Activated CD4-positive, alpha-beta T cell treated with anti-CD3 and anti-CD28 coated beads for 36 hours (primary cell): ENCODE measurements at regions of chr17 and their contacts with region 1.

Region 1: GRCh38 chr17:44968226-44969143 is at the start of gene C1QL1:
- DNase-seq: peak; percentile 93
- ATAC-seq: peak; percentile 79
- H3K4me3 Mint-ChIP-seq: peak within 1 kb of the TSS; percentile 64
- H3K27ac Mint-ChIP-seq: no peak within 1 kb of the TSS
- H3K4me1 Mint-ChIP-seq: peaks cover 44% of the 10 kb centered on the region
- H3K27me3 Mint-ChIP-seq: peaks cover 41% of the 10 kb centered on the region
- total RNA-seq, gene C1QL1: 0.37 to 0.83 TPM

Region 2: GRCh38 chr17:44385287-44386181 is 583.0 kb before region 1 on chr17:
- CTCF ChIA-PET with region 1: no interaction called
- POLR2A ChIA-PET with region 1: no interaction called
- intact Hi-C with region 1: loop called in 1 of 2 experiments (anchors 1 kb)
- DNase-seq: peak; percentile 96
- ATAC-seq: peak; percentile 96
- H3K4me3 Mint-ChIP-seq: peak overlapping the region; percentile 62
- H3K27ac Mint-ChIP-seq: peak overlapping the region; percentile 21
- H3K4me1 Mint-ChIP-seq: peaks cover 12% of the 10 kb centered on the region
- H3K27me3 Mint-ChIP-seq: peaks cover 22% of the 10 kb centered on the region

Region 3: GRCh38 chr17:44829523-44830358 is 138.7 kb before region 1 on chr17 and contains the start of gene GJC1:
- CTCF ChIA-PET with region 1: no interaction called
- POLR2A ChIA-PET with region 1: no interaction called
- intact Hi-C with region 1: loop called in 1 of 2 experiments (anchors 5 kb)
- DNase-seq: peak; percentile 50
- ATAC-seq: peak; percentile 64
- H3K4me3 Mint-ChIP-seq: peak within 1 kb of the TSS; percentile 76
- H3K27ac Mint-ChIP-seq: peak within 1 kb of the TSS; percentile 75
- H3K4me1 Mint-ChIP-seq: peaks cover 13% of the 10 kb centered on the region
- H3K27me3 Mint-ChIP-seq: peaks cover 36% of the 10 kb centered on the region
- total RNA-seq, gene GJC1: 3.3 to 3.7 TPM

Region 4: DNA sequence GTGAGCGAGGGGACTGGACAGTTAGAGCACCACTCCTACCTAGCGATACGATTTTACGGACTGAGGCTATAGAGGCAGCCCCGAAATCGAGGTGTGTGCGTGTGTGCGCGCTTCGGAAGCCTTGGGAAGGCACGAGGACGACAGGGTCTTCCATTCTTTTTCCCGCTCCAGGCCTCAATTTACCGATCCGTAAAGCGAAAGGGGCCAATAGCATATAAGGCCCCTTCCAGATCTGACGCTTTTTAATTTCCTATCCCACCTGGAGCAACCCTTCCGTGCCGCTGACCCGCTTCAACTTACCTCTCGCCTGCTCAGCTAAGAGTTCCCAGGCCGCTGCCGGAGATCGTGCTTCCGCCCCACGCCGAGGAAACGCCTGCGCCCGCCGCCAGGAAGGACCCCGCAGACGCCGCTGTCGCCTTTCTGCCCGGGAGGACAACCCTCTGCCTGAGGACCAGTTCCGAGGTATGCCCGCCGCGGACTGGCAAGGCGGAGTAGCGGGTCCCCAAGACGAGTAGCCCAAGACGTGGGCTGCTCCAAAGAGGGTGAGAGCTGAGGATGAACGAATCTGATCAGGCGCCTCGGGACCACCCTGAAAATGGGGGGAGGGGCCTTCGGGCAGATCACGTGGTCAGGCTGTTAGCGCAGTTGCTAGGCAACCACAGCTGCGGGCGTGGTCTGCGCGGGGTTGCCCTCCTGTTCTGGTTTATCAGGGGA is 69.3 kb before region 1 on chr17 and contains the start of gene EFTUD2:
- CTCF ChIA-PET with region 1: interaction called, 4 read pairs
- POLR2A ChIA-PET with region 1: interaction called, 3 read pairs
- intact Hi-C with region 1: loop called (anchors 1 to 5 kb)
- DNase-seq: peak; percentile 95
- ATAC-seq: peak; percentile 94
- H3K4me3 Mint-ChIP-seq: peak within 1 kb of the TSS; percentile 98
- H3K27ac Mint-ChIP-seq: peak within 1 kb of the TSS; percentile 98
- H3K4me1 Mint-ChIP-seq: peaks cover 26% of the 10 kb centered on the region
- H3K27me3 Mint-ChIP-seq: no peaks in the 10 kb centered on the region
- total RNA-seq, gene EFTUD2: 175 to 203 TPM

Region 5: GRCh38 chr17:44947461-44948314 is 20.8 kb before region 1 on chr17 and contains the start of gene KIF18B:
- CTCF ChIA-PET with region 1: interaction called, 6 read pairs
- POLR2A ChIA-PET with region 1: interaction called, 3 read pairs
- intact Hi-C with region 1: loop called (anchors 1 to 2 kb)
- DNase-seq: peak; percentile 96
- ATAC-seq: peak; percentile 98
- H3K4me3 Mint-ChIP-seq: peak within 1 kb of the TSS; percentile 90
- H3K27ac Mint-ChIP-seq: peak within 1 kb of the TSS; percentile 88
- H3K4me1 Mint-ChIP-seq: peaks cover 4% of the 10 kb centered on the region
- H3K27me3 Mint-ChIP-seq: no peaks in the 10 kb centered on the region
- total RNA-seq, gene KIF18B: 38.9 to 48.7 TPM

Region 6: DNA sequence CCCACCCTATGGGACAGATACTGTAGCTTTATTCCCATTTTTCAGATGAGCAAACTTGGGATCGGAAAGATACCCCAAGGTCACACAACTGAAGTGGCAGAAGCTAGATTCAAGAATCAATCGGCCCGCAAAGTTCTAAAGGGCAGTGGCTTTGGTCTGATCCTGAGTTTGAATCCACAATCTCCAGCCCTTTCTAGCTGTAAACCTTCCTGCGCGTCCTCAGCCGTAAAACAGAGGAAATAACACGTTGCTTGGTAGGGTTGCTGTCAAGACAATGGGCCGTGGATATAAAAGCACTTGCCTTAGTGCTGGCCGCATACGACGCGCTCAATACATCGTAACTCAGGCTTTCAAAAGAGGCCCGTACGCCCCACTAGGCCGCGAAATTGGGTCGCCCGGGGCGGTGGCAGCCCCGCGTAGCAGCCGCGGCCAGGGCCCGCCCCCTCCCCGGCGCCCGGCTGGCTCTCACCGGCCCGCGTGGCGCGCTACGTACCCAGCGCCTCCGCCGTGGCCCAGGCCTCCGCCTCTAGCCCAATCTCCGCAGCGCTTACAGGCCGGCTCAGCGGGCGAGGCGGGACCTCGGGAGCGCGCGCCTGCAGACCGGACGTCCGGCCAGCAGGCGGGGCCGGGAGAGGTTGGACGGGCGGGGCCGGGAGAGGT is 82.7 kb after region 1 on chr17 and contains the start of gene DCAKD:
- CTCF ChIA-PET with region 1: interaction called, 5 read pairs
- POLR2A ChIA-PET with region 1: no interaction called
- intact Hi-C with region 1: loop called in 1 of 2 experiments (anchors 1 kb)
- DNase-seq: peak; percentile 96
- ATAC-seq: peak; percentile 97
- H3K4me3 Mint-ChIP-seq: peak within 1 kb of the TSS; percentile 87
- H3K27ac Mint-ChIP-seq: peak within 1 kb of the TSS; percentile 95
- H3K4me1 Mint-ChIP-seq: peaks cover 50% of the 10 kb centered on the region
- H3K27me3 Mint-ChIP-seq: no peaks in the 10 kb centered on the region
- total RNA-seq, gene DCAKD: 34.8 to 36.2 TPM